Heart right ventricle (tissue), 16 donors: ENCODE measurements at regions of chr2 and their contacts with region 1.

Region 1: DNA sequence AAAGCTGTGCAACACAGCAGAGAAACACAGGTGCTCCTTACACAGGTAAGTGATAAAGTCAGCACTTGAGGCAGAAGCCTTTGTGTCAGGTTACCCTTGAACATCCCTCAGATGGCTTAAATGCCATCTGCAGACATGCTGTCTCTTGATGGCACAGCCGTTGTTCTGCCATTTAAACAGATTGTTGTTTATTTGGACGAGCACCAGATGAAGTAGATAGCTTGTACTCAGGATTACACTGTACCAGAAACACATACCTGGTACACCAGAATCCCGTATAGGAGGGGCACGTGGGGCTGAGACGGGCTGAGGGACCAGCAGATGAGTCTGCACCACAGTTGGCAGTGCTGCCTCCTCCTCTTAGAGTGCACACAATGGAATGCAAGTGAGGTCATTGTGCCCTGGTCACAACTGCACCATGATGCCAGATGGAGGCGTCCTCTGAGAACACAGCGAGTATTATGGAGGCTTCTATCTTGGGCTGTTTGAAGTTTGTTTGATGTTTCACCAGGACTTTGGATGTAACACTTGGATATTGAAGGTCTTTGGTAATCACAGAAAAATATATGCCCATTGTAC is 143.0 kb downstream of the TANC1 start:
- DNase-seq: peak in 1 of 2 donors; percentile 64
- ATAC-seq: peak; percentile 36 to 88 (median 78)
- H3K4me3 ChIP-seq: no peak overlapping the region
- H3K27ac ChIP-seq: peak overlapping the region in 6 of 10 donors; percentile 31 to 68 (median 59)
- H3K4me1 ChIP-seq: peaks cover 0 to 81% (median 35%) of the 10 kb centered on the region in 9 donors
- H3K27me3 ChIP-seq: no peaks in the 10 kb centered on the region
- CTCF ChIP-seq: peak in 1 of 9 donors; percentile 3

Region 2: DNA sequence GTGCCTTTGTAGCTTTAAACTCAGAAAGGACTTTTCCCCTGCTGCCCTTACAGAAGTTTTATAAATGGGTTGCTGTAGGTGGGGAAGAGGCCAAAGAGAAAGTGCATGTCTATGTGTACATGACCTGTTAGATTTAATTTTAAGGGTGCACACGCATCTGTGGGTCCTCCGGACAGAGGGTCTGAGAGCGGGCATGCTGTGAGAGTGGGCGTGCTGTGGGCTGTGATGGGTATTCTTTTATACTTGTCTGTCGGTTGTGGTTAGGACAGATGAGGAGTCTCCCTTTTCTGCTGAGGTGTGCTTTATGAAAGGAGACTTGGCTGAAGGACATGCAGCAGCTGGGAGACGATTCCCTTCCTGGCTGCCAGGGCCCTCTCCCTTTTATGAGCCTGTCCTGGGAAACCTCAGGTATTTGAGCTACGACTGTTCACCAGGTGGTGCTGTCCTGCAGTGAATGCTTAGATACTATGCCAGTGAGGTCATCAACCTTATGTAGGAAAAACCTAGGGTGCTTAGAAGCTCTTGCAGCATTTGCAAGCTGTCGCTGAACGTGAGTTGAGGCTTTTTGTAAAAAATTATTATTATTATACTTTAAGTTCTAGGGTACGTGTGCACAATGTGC is 75.5 kb before region 1 on chr2:
- intact Hi-C with region 1: loop called in 6 of 10 experiments (anchors 5 to 10 kb)
- DNase-seq: no peak
- ATAC-seq: peak in 7 of 8 donors; percentile 53 to 74 (median 69)
- H3K4me3 ChIP-seq: no peak overlapping the region
- H3K27ac ChIP-seq: peak overlapping the region in 7 of 10 donors; percentile 6 to 50 (median 38)
- H3K4me1 ChIP-seq: peaks cover 17 to 62% (median 45%) of the 10 kb centered on the region in 9 donors
- H3K27me3 ChIP-seq: no peaks in the 10 kb centered on the region
- CTCF ChIP-seq: peak in 7 of 9 donors; percentile 15 to 53 (median 43)